Caco-2 (cell line): ENCODE measurements at regions of chr17 and their contacts with region 1.

Region 1: DNA sequence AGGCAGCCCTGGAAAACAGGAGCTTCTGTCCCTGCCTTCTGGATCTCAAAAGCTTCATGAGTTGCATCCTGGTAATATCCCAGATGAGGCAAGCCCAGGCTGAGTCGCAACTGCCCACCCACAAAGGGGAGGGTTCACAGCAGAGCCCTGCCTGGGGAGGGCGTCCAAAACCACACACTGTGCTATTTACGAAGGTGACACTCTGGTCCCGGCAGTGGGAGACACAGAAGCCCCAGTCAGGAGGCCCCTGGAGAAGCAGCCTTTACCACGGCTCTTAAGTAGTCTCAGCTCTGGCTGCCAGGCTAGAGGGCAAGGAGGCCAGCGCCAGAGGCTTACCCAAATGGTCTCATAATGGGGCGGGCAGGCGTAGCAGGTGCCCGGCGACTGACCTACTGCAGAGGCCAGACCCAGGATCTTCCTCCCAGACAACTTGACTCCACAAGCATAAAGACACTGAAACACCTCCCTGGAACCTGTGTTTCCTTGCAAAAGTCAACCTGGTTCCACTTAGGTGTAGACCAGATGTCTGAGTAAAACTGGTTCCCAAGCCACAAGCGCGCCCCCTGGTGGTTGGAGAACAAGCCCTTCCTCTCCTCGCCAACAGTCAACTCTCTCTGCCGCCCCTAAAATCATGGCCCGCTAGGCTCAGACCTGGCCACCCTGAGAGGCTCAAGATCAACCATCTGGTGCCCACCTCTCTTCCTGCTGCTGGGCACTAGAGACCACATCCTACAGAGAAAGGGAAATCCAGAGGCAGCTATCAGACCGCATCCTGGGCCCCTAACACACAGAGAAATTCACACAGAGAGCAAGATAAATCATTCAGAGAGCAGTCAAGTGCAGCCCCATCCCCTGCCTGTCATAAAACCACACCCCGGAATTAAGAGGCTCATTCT is 5.2 kb downstream of the AXIN2 start:
- DNase-seq: peak; percentile 85 to 89
- H3K4me3 ChIP-seq: peak overlapping the region; percentile 86
- H3K4me3 Mint-ChIP-seq: no peak overlapping the region
- H3K27ac Mint-ChIP-seq: no peak overlapping the region
- H3K4me1 ChIP-seq: peaks cover 33% of the 10 kb centered on the region
- H3K4me1 Mint-ChIP-seq: peaks cover 14% of the 10 kb centered on the region
- H3K27me3 ChIP-seq: no peaks in the 10 kb centered on the region
- H3K27me3 Mint-ChIP-seq: no peaks in the 10 kb centered on the region
- CTCF ChIP-seq: peak; percentile 88 to 95

Region 2: GRCh38 chr17:65231662-65232335 is 324.5 kb before region 1 on chr17:
- CTCF ChIA-PET with region 1: no interaction called
- POLR2A ChIA-PET with region 1: no interaction called
- intact Hi-C with region 1: loop called (anchors 5 kb)
- DNase-seq: peak; percentile 65 to 77
- H3K4me3 ChIP-seq: no peak overlapping the region
- H3K4me3 Mint-ChIP-seq: no peak overlapping the region
- H3K27ac Mint-ChIP-seq: no peak overlapping the region
- H3K4me1 ChIP-seq: peaks cover 15% of the 10 kb centered on the region
- H3K4me1 Mint-ChIP-seq: peaks cover 27% of the 10 kb centered on the region
- H3K27me3 ChIP-seq: no peaks in the 10 kb centered on the region
- H3K27me3 Mint-ChIP-seq: peaks cover 1% of the 10 kb centered on the region
- CTCF ChIP-seq: peak; percentile 76 to 88

Region 3: DNA sequence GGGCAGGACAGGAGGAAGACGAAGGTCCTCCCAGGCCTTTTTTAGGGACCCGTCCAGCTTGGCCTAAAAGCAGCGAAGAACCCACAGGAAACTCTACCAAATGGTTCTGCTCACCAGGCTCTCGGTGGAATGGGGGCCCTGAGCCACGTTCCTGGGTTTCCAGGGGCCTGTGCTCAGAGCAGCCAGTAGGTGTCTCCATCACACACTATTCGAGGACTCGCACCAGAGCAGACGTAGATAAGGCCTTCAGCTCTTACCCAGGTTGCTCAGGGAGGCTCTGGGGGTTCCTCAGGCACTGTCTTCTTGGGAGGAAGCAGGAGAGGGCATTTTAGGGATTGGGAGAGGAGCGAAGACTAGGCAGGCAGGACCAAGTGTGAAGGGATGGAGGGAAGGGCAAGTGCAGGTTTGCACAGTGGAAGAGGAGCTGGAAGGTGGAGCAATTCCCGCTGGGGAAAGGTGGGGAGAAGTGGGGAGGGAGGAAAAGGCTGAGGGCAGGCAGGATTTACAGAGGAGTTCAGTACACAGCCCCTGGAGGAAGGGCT is 262.0 kb before region 1 on chr17:
- CTCF ChIA-PET with region 1: interaction called, 10 read pairs
- POLR2A ChIA-PET with region 1: no interaction called
- intact Hi-C with region 1: loop called (anchors 1 kb)
- DNase-seq: peak; percentile 74 to 78
- H3K4me3 ChIP-seq: no peak overlapping the region
- H3K4me3 Mint-ChIP-seq: no peak overlapping the region
- H3K27ac Mint-ChIP-seq: peak overlapping the region; percentile 25
- H3K4me1 ChIP-seq: peaks cover 13% of the 10 kb centered on the region; the same call in 1 of the 2 replicates
- H3K4me1 Mint-ChIP-seq: peaks cover 15% of the 10 kb centered on the region
- H3K27me3 ChIP-seq: no peaks in the 10 kb centered on the region
- H3K27me3 Mint-ChIP-seq: no peaks in the 10 kb centered on the region
- CTCF ChIP-seq: peak; percentile 88 to 90

Region 4: GRCh38 chr17:65504141-65504540 is 52.1 kb before region 1 on chr17:
- CTCF ChIA-PET with region 1: no interaction called
- POLR2A ChIA-PET with region 1: no interaction called
- intact Hi-C with region 1: no loop called
- DNase-seq: no peak
- H3K4me3 ChIP-seq: no peak overlapping the region
- H3K4me3 Mint-ChIP-seq: no peak overlapping the region
- H3K27ac Mint-ChIP-seq: no peak overlapping the region
- H3K4me1 ChIP-seq: no peaks in the 10 kb centered on the region
- H3K4me1 Mint-ChIP-seq: no peaks in the 10 kb centered on the region
- H3K27me3 ChIP-seq: no peaks in the 10 kb centered on the region
- H3K27me3 Mint-ChIP-seq: no peaks in the 10 kb centered on the region
- CTCF ChIP-seq: no peak

Region 5: GRCh38 chr17:65531263-65532100 is 24.8 kb before region 1 on chr17:
- CTCF ChIA-PET with region 1: no interaction called
- POLR2A ChIA-PET with region 1: no interaction called
- intact Hi-C with region 1: loop called (anchors 1 kb)
- DNase-seq: peak; percentile 88 to 89
- H3K4me3 ChIP-seq: no peak overlapping the region
- H3K4me3 Mint-ChIP-seq: peak overlapping the region; percentile 54
- H3K27ac Mint-ChIP-seq: peak overlapping the region; percentile 88
- H3K4me1 ChIP-seq: peaks cover 69% of the 10 kb centered on the region
- H3K4me1 Mint-ChIP-seq: peaks cover 63% of the 10 kb centered on the region
- H3K27me3 ChIP-seq: no peaks in the 10 kb centered on the region
- H3K27me3 Mint-ChIP-seq: no peaks in the 10 kb centered on the region
- CTCF ChIP-seq: peak; percentile 41 to 58

Region 6: GRCh38 chr17:65567566-65567965 is 11.3 kb after region 1 on chr17:
- CTCF ChIA-PET with region 1: no interaction called
- POLR2A ChIA-PET with region 1: no interaction called
- intact Hi-C with region 1: no loop called
- DNase-seq: no peak
- H3K4me3 ChIP-seq: no peak overlapping the region
- H3K4me3 Mint-ChIP-seq: no peak overlapping the region
- H3K27ac Mint-ChIP-seq: no peak overlapping the region
- H3K4me1 ChIP-seq: peaks cover 30% of the 10 kb centered on the region
- H3K4me1 Mint-ChIP-seq: peaks cover 40% of the 10 kb centered on the region
- H3K27me3 ChIP-seq: no peaks in the 10 kb centered on the region
- H3K27me3 Mint-ChIP-seq: no peaks in the 10 kb centered on the region
- CTCF ChIP-seq: no peak

Region 7: DNA sequence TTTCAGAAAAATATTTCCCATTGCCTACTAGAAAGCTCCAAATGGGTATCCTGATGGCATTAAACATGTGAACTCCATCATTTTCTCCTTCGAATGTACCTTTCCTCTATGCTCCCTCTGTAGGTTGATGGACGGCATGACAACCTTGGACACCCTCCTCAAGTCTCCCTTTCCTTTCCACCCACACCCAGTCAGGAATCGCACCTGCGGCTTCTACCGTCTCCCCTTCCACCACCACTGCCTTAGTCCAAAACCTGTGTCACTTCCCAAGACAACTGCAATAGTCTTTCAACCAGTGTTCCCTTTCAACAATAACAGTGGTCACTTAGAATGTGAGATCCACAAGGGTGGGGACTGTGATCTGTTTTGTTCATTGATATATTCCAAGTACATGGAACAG is 238.3 kb after region 1 on chr17:
- CTCF ChIA-PET with region 1: no interaction called
- POLR2A ChIA-PET with region 1: no interaction called
- intact Hi-C with region 1: loop called (anchors 2 kb)
- DNase-seq: peak; percentile 51 to 52
- H3K4me3 ChIP-seq: no peak overlapping the region
- H3K4me3 Mint-ChIP-seq: no peak overlapping the region
- H3K27ac Mint-ChIP-seq: no peak overlapping the region
- H3K4me1 ChIP-seq: no peaks in the 10 kb centered on the region
- H3K4me1 Mint-ChIP-seq: peaks cover 6% of the 10 kb centered on the region
- H3K27me3 ChIP-seq: no peaks in the 10 kb centered on the region
- H3K27me3 Mint-ChIP-seq: no peaks in the 10 kb centered on the region
- CTCF ChIP-seq: peak; percentile 70 to 75